HEK293 (cell line): ENCODE measurements at regions of chr4 and their contacts with region 1.

Region 1: DNA sequence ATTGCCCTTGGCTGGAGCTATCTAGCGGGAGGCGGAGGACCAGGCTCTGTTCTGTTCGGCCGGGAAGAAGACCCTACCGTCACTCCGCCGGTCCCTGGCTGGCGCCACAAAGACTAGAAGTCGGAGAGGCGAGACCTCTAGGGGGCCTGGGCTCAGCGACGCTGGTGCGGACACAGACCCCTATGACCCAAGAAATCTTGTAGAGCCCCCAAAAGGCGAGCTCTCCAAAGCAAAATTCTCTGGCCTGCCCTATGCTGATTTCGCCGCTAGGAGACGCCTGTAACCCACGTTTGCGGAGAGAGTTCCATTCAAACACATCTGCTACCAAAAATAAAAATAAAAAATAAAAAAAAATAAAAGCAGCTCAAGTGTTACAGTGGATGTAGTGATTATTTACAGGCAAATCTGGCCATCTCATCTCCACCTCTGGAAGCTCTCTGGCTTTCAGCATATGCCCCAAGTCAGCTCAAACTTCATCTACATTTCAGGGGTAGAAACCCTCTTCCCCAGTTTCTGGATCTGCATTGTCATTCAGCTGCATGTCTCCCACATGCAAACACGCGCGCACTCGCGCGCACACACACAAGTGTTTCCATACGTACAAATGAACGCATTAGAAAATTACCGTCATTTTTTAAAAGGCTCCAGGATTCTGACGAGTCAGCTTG is 2.4 kb upstream of the PCDH10 start:
- H3K4me3 ChIP-seq: peak overlapping the region; percentile 44
- H3K27ac ChIP-seq: no peak overlapping the region
- H3K4me1 ChIP-seq: no peaks in the 10 kb centered on the region; the same call in 1 of the 2 replicates
- CTCF ChIP-seq: 0 out of 2 replicates have a peak, but pooled peaks have one; percentile 15

Region 2: GRCh38 chr4:133157460-133158160 is 10.9 kb after region 1 on chr4:
- CTCF ChIA-PET with region 1: interaction called, 11 read pairs
- POLR2A ChIA-PET with region 1: no interaction called
- H3K4me3 ChIP-seq: no peak overlapping the region
- H3K27ac ChIP-seq: no peak overlapping the region
- H3K4me1 ChIP-seq: no peaks in the 10 kb centered on the region
- CTCF ChIP-seq: no peak